ENCODE measurements at regions of chr20 and their contacts with region 1.

Region 1: GRCh38 chr20:48921151-48921898 is at the start of gene ARFGEF2:
- DNase-seq: peak; percentile 64
- H3K4me3 ChIP-seq: peak within 1 kb of the TSS; percentile 97
- CTCF ChIP-seq: no peak

Region 2: GRCh38 chr20:48657475-48658470 is 263.6 kb before region 1 on chr20:
- in situ Hi-C with region 1: loop called (anchors 25 kb)
- DNase-seq: peak; percentile 57
- H3K4me3 ChIP-seq: no peak overlapping the region
- CTCF ChIP-seq: peak; percentile 88

Region 3: GRCh38 chr20:48853591-48854443 is 67.5 kb before region 1 on chr20:
- in situ Hi-C with region 1: no loop called
- DNase-seq: no peak
- H3K4me3 ChIP-seq: no peak overlapping the region
- CTCF ChIP-seq: no peak

Region 4: GRCh38 chr20:48962976-48963771 is 41.8 kb after region 1 on chr20:
- in situ Hi-C with region 1: no loop called
- DNase-seq: no peak
- H3K4me3 ChIP-seq: no peak overlapping the region
- CTCF ChIP-seq: no peak